Naive thymus-derived CD4-positive, alpha-beta T cell (primary cell): ENCODE measurements at regions of chr4 and their contacts with region 1.

Region 1: GRCh38 chr4:185425647-185426352 is at the start of gene UFSP2:
- DNase-seq: peak; percentile 88 to 96 (median 92)
- ATAC-seq: peak; percentile 93
- H3K4me3 ChIP-seq: peak within 1 kb of the TSS; percentile 98
- H3K4me3 Mint-ChIP-seq: peak within 1 kb of the TSS; percentile 78 to 97 (median 90)
- H3K27ac ChIP-seq: peak within 1 kb of the TSS; percentile 95
- H3K27ac Mint-ChIP-seq: peak within 1 kb of the TSS; percentile 89 to 100 (median 99)
- H3K4me1 ChIP-seq: peaks cover 16 to 18% of the 10 kb centered on the region in 2 donors
- H3K4me1 Mint-ChIP-seq: peaks cover 25 to 43% (median 38%) of the 10 kb centered on the region in 7 donors
- H3K27me3 ChIP-seq: no peaks in the 10 kb centered on the region
- H3K27me3 Mint-ChIP-seq: peaks cover 0 to 12% (median 7%) of the 10 kb centered on the region in 5 donors
- total RNA-seq, gene UFSP2: 13.9 to 34.5 (median 21.0) TPM

Region 2: GRCh38 chr4:185209031-185209851 is 216.6 kb before region 1 on chr4 and contains the start of gene SNX25:
- CTCF ChIA-PET with region 1: no interaction called
- POLR2A ChIA-PET with region 1: no interaction called
- intact Hi-C with region 1: loop called (anchors 1 kb)
- DNase-seq: peak; percentile 77 to 93 (median 83)
- ATAC-seq: peak; percentile 96
- H3K4me3 ChIP-seq: peak within 1 kb of the TSS; percentile 81
- H3K4me3 Mint-ChIP-seq: peak within 1 kb of the TSS; percentile 87 to 95 (median 93)
- H3K27ac ChIP-seq: peak within 1 kb of the TSS; percentile 39
- H3K27ac Mint-ChIP-seq: peak within 1 kb of the TSS; percentile 82 to 93 (median 91)
- H3K4me1 ChIP-seq: peaks cover 27 to 28% of the 10 kb centered on the region in 2 donors
- H3K4me1 Mint-ChIP-seq: peaks cover 31 to 56% (median 47%) of the 10 kb centered on the region in 7 donors
- H3K27me3 ChIP-seq: no peaks in the 10 kb centered on the region
- H3K27me3 Mint-ChIP-seq: peaks cover 0 to 15% (median 0%) of the 10 kb centered on the region in 5 donors
- total RNA-seq, gene SNX25: 8.0 to 18.9 (median 14.3) TPM

Region 3: DNA sequence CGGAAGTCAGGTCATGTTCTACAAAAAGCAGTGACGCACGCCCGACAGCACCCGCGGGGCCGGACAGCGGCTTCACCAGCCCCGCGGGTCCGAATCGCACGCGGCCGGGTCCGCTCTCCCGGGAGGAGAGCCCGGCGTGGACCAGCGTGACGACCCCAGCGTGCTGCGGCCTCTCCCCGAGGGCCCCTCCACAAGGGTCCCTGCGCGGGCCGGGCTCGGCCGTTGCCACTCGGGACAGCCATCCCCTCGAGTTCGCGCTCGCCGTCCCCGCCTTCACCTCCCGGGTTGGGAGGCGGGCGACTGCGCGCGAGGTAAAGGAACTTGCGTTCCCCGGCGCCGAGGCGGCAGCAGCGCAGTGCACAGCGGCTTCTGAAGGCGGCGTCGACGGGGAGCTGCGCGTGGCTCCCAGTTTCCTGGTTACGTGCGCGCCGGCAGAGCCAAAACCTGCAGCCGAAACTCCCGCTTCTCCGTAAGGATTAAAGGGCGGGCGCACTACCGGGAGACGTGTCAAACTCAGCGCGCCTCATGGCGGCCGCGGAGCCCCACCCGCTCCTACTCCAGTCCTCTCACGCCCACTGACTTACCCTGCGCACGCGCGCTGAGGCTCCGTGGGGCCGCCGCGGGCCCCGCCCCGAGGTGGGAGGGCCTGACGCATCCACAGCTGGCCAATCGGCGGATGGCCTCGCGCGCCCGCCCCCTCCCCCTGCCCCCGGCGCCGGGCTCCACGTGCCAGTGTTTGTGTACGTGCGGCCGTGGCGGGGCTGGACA is 29.7 kb before region 1 on chr4:
- CTCF ChIA-PET with region 1: interaction called, 4 read pairs
- POLR2A ChIA-PET with region 1: interaction called, 49 read pairs
- intact Hi-C with region 1: loop called (anchors 1 kb)
- DNase-seq: peak; percentile 93 to 100 (median 97)
- ATAC-seq: peak; percentile 97
- H3K4me3 ChIP-seq: peak overlapping the region; percentile 69
- H3K4me3 Mint-ChIP-seq: peak overlapping the region; percentile 82 to 100 (median 97)
- H3K27ac ChIP-seq: peak overlapping the region; percentile 97
- H3K27ac Mint-ChIP-seq: peak overlapping the region; percentile 90 to 100 (median 99)
- H3K4me1 ChIP-seq: peaks cover 12 to 15% of the 10 kb centered on the region in 2 donors
- H3K4me1 Mint-ChIP-seq: peaks cover 14 to 57% (median 27%) of the 10 kb centered on the region in 7 donors
- H3K27me3 ChIP-seq: no peaks in the 10 kb centered on the region
- H3K27me3 Mint-ChIP-seq: no peaks in the 10 kb centered on the region

Region 4: DNA sequence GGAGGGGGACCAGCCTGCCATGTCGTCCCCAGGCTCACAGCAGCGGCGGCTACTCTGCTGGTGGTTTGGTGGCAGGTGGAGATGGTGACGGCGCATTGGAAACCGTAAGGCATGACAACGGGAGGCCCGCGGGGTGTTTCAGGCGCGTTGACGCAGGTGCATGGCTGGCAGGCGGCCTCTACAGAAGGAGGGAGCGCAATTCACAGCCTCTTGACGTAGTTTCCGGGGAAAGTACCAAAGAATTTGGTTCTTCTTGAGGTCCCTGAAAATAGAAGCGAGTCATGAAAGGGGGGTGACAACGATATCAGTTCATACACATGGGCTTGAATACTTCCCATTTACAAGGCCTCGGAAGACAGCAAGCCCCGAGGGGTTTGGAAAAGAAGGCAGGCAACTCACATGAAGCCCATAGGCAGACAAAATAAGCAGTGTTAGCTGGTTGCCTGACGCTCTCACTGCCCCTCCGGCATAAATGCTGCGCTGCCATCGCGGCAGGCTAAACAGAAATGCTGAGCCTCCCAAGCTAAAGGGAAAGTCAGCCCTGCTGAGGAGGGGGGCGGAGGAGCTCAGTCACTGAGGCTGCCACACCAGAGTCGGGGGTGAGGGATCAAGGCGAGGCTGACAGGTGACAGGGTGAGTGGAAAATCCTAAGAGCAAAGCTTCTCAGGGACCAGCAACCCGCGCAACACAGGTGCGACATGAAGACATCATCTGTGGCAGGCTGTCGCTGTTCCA is 161.8 kb after region 1 on chr4:
- CTCF ChIA-PET with region 1: no interaction called
- POLR2A ChIA-PET with region 1: no interaction called
- intact Hi-C with region 1: loop called in 1 of 2 experiments (anchors 1 kb)
- DNase-seq: peak; percentile 22 to 91 (median 73)
- ATAC-seq: peak; percentile 92
- H3K4me3 ChIP-seq: peak overlapping the region; percentile 2
- H3K4me3 Mint-ChIP-seq: peak overlapping the region; percentile 67 to 86 (median 78)
- H3K27ac ChIP-seq: no peak overlapping the region
- H3K27ac Mint-ChIP-seq: peak overlapping the region in 8 of 9 donors; percentile 31 to 94 (median 84)
- H3K4me1 ChIP-seq: no peaks in the 10 kb centered on the region
- H3K4me1 Mint-ChIP-seq: peaks cover 8 to 20% (median 14%) of the 10 kb centered on the region in 7 donors
- H3K27me3 ChIP-seq: peaks cover 0 to under 1% of the 10 kb centered on the region in 2 donors
- H3K27me3 Mint-ChIP-seq: peaks cover 58 to 61% (median 60%) of the 10 kb centered on the region in 5 donors

Region 5: DNA sequence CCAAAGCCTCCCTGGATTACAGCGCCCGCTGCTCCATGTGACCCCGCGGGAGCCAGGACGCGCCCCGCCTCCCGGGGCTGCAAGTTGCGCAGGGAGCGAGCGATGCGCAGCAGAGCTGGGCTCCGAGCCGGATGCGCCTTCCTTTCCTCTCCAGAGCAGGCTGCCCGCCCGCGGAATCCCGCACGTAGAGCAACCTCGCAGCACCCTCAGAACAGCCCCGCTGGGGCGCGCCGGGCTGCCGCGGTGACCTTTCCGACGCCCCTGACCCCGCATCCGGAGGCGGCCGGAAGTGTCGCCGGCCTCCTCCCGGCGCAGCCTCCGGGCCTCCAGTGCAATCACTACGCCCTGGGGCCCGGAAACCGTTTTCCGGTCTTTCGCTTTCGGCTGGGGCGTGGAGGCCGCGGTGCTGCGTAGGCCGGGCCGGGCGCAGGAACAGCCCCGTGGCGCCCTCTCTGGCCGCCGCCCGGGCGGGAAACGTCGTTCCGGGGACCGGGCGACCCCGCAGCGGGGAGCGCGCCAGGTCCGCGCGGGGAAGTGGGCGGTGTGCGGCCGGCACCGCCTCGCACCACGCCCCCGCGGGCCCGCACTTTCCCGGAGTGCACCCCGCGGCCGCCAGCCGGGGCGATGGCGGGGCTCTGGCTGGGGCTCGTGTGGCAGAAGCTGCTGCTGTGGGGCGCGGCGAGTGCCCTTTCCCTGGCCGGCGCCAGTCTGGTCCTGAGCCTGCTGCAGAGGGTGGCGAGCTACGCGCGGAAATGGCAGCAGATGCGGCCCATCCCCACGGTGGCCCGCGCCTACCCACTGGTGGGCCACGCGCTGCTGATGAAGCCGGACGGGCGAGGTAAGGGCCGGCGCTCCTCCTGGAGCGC is 765.6 kb after region 1 on chr4 and contains the start of gene CYP4V2:
- CTCF ChIA-PET with region 1: no interaction called
- POLR2A ChIA-PET with region 1: no interaction called
- intact Hi-C with region 1: loop called in 1 of 2 experiments (anchors 10 kb)
- DNase-seq: peak; percentile 68 to 94 (median 90)
- ATAC-seq: peak; percentile 90
- H3K4me3 ChIP-seq: peak within 1 kb of the TSS; percentile 91
- H3K4me3 Mint-ChIP-seq: peak within 1 kb of the TSS; percentile 89 to 97 (median 94)
- H3K27ac ChIP-seq: peak within 1 kb of the TSS; percentile 95
- H3K27ac Mint-ChIP-seq: peak within 1 kb of the TSS; percentile 94 to 99 (median 98)
- H3K4me1 ChIP-seq: peaks cover 12 to 19% of the 10 kb centered on the region in 2 donors
- H3K4me1 Mint-ChIP-seq: peaks cover 34 to 62% (median 56%) of the 10 kb centered on the region in 7 donors
- H3K27me3 ChIP-seq: no peaks in the 10 kb centered on the region
- H3K27me3 Mint-ChIP-seq: no peaks in the 10 kb centered on the region
- total RNA-seq, gene CYP4V2: 19.7 to 41.4 (median 26.0) TPM